Common myeloid progenitor, CD34-positive (primary cell): ENCODE measurements at regions of chr7 and their contacts with region 1.

Region 1: GRCh38 chr7:134646425-134647305 is at the start of gene BPGM:
- DNase-seq: peak; percentile 100
- H3K4me3 ChIP-seq: peak within 1 kb of the TSS; percentile 55 to 96 (median 89)
- H3K27ac ChIP-seq: peak within 1 kb of the TSS; percentile 87 to 95
- H3K4me1 ChIP-seq: peaks cover 9 to 22% (median 15%) of the 10 kb centered on the region in 4 experiments
- H3K27me3 ChIP-seq: no peaks in the 10 kb centered on the region

Region 2: DNA sequence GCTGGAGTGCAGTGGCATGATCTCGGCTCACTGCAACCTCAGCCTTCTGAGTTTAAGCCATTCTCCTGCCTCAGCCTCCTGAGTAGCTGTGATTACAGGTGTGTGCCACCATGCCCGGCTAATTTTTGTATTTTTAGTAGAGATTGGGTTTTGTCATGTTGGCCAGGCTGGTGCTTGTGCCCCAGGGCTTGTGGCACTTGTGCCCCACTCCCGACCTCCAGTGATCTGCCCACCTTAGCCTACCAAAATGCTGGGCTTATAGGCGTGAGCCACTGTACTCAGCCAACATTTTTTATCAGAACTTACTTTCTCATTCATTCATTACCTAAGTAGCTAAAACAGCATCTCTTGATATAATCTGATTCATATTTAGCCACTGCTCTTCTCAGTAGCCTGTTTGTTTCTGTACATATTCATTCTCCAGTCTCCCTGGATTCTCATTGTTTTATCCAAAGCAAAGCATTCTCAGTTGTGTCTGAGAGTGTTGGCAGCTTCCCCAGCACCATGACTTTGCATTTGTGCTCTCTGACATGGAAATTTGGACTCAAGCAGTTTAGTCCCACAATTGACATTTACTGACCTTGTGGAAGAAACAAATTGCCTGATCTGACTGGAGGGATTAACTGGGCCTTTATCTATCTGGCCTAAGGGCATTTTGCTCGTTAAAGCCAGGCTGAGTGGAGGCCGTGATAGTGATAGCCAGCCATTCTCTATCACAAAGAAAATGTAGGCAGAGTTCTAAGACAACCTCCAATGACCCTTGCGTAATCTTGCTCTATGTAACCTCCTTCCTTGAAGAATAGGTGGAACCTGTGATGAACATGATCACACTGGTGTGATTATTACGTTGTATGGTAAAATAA is 52.9 kb before region 1 on chr7:
- CTCF ChIA-PET with region 1: no interaction called
- POLR2A ChIA-PET with region 1: no interaction called
- DNase-seq: peak; percentile 74 to 91 (median 91)
- H3K4me3 ChIP-seq: no peak overlapping the region
- H3K27ac ChIP-seq: no peak overlapping the region
- H3K4me1 ChIP-seq: peaks cover 0 to 6% (median 6%) of the 10 kb centered on the region in 4 experiments
- H3K27me3 ChIP-seq: no peaks in the 10 kb centered on the region

Region 3: GRCh38 chr7:134660961-134661376 is 14.3 kb after region 1 on chr7:
- CTCF ChIA-PET with region 1: interaction called, 14 read pairs
- POLR2A ChIA-PET with region 1: interaction called, 3 read pairs
- DNase-seq: no peak
- H3K4me3 ChIP-seq: no peak overlapping the region
- H3K27ac ChIP-seq: no peak overlapping the region
- H3K4me1 ChIP-seq: no peaks in the 10 kb centered on the region
- H3K27me3 ChIP-seq: no peaks in the 10 kb centered on the region

Region 4: GRCh38 chr7:134669845-134670373 is 23.2 kb after region 1 on chr7:
- CTCF ChIA-PET with region 1: interaction called, 18 read pairs
- POLR2A ChIA-PET with region 1: interaction called, 25 read pairs
- DNase-seq: peak; percentile 89 to 96 (median 95)
- H3K4me3 ChIP-seq: peak overlapping the region in 5 of 7 experiments; percentile 5 to 62 (median 16)
- H3K27ac ChIP-seq: peak overlapping the region in 1 of 2 experiments; percentile 67
- H3K4me1 ChIP-seq: peaks cover 12 to 28% (median 20%) of the 10 kb centered on the region in 4 experiments
- H3K27me3 ChIP-seq: no peaks in the 10 kb centered on the region

Region 5: GRCh38 chr7:134690016-134690415 is 43.4 kb after region 1 on chr7:
- CTCF ChIA-PET with region 1: interaction called, 24 read pairs
- POLR2A ChIA-PET with region 1: interaction called, 6 read pairs
- DNase-seq: peak in 2 of 3 donors; percentile 28
- H3K4me3 ChIP-seq: no peak overlapping the region
- H3K27ac ChIP-seq: no peak overlapping the region
- H3K4me1 ChIP-seq: peaks cover 0 to 10% (median 4%) of the 10 kb centered on the region in 4 experiments
- H3K27me3 ChIP-seq: peaks cover 0 to 28% (median 4%) of the 10 kb centered on the region in 5 experiments

Region 6: DNA sequence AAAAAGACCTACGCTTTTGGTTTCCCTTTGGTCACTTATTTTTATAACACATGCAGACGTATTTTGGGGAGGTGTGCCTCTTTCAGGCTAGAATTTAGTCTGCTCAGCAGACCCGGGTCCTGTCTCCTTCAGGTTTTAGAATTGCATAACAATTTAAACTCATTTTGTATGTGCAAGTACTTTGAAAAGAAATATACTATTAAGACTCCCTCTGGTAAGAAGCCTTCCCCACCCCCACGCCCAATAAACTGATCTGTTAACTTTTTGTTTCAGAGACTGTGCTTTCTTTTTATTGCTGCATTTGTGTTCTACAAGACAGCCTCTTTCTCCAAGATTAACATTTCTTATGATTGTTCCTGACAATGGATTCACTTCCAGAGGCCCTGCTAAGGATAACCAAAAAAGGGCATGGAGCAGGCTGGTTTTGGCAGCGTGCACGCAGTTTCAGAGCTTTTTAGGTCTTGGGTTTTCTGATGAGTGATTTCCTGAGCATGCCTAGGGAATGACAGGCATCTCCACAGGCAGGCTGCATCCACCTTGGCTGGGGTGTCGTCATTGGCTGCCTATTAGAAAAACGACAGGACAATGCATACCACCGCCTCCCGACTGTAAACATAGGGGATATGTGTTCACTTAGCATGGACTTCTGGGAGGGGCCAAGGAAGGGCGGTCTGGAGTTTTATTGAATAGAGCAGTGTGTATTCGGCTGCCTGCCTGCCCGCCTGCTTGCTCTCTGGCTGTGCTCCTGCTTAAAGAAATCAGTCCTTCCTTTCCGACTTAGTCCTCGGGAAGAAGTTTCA is 132.5 kb after region 1 on chr7 and contains the start of gene CALD1:
- CTCF ChIA-PET with region 1: no interaction called
- POLR2A ChIA-PET with region 1: no interaction called
- DNase-seq: no peak
- H3K4me3 ChIP-seq: no peak within 1 kb of the TSS
- H3K27ac ChIP-seq: no peak within 1 kb of the TSS
- H3K4me1 ChIP-seq: peaks cover 0 to 2% (median 0%) of the 10 kb centered on the region in 4 experiments
- H3K27me3 ChIP-seq: peaks cover 0 to 6% (median 0%) of the 10 kb centered on the region in 5 experiments